BJ (cell line): ENCODE measurements at regions of chr11 and their contacts with region 1.

Region 1: GRCh38 chr11:76207642-76208401 is 1.5 kb upstream of the WNT11 start:
- DNase-seq: no peak
- H3K4me3 ChIP-seq: peak overlapping the region; percentile 39
- H3K27me3 ChIP-seq: peaks cover 58% of the 10 kb centered on the region
- CTCF ChIP-seq: peak; percentile 76

Region 2: DNA sequence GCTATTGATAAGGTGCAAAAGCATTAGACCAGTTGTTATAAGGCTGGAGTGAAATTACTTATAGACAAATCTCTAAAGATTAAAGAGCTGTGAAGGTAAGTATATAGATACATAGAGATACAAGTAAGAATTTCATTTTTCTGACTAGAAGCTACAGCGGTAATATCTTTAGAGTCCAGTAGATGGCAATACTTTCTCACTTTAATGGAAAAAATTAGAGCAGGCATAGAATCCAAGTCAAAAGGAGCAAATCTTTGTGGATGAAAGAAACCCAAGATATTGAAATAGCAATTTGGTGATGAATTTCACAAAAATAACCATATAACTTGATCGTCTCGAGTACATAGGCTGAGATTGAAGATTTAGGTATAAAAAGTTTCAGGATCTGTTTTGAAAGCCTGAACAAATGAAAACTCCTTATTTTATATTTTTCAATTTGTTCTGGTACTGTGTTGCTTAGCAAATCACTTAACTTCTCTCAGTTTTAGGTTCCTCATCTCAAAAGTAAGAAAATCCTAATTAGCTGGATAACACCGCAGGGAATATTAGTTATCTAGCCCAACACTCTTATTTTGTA is 310.9 kb before region 1 on chr11:
- CTCF ChIA-PET with region 1: interaction called, 45 read pairs
- POLR2A ChIA-PET with region 1: no interaction called
- DNase-seq: no peak
- H3K4me3 ChIP-seq: no peak overlapping the region
- H3K27me3 ChIP-seq: no peaks in the 10 kb centered on the region
- CTCF ChIP-seq: peak; percentile 53

Region 3: DNA sequence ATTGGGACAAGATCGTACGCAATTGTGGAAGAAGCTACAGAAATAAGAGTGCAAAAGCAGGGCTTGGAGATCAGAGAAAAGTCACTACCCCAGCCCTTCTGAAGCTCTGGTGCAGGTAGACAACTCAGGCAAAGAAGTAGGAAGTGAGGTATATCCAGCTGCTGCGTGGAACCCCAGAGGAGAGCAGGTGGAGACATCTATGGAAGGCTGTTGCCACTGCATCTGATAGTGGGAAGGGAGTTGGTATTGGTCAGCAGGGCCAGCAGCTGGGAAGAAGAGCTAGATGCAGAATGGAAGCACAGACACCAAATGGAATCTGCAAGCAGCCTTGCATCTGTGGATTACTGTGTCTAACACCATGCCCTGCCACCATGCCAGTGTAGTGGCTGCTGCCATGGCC is 166.6 kb before region 1 on chr11:
- CTCF ChIA-PET with region 1: no interaction called
- POLR2A ChIA-PET with region 1: no interaction called
- DNase-seq: no peak
- H3K4me3 ChIP-seq: no peak overlapping the region
- H3K27me3 ChIP-seq: no peaks in the 10 kb centered on the region
- CTCF ChIP-seq: no peak

Region 4: DNA sequence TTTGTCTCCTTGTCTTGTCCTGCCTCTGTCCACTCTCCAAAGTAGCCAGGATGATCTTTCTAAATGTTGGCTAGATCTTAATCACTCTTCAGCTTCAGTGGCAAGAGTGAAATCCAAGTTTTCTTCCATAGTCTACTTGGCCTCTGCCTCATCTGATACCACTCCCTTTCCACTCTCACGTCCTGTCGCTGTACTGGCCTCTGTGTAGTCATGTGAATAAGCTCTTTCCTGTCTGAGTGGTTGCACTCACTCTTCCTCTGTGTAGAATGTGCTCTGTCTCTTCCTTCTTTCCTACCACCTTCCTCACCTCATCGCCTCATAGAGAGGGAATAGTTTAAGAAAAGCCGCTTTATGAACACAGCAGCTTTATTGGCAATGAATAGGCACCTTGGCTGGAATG is 88.0 kb before region 1 on chr11:
- CTCF ChIA-PET with region 1: no interaction called
- POLR2A ChIA-PET with region 1: no interaction called
- DNase-seq: no peak
- H3K4me3 ChIP-seq: no peak overlapping the region
- H3K27me3 ChIP-seq: no peaks in the 10 kb centered on the region
- CTCF ChIP-seq: no peak

Region 5: GRCh38 chr11:76194872-76195668 is 12.8 kb before region 1 on chr11:
- CTCF ChIA-PET with region 1: interaction called, 27 read pairs
- POLR2A ChIA-PET with region 1: no interaction called
- DNase-seq: no peak
- H3K4me3 ChIP-seq: no peak overlapping the region
- H3K27me3 ChIP-seq: peaks cover 16% of the 10 kb centered on the region
- CTCF ChIP-seq: no peak

Region 6: DNA sequence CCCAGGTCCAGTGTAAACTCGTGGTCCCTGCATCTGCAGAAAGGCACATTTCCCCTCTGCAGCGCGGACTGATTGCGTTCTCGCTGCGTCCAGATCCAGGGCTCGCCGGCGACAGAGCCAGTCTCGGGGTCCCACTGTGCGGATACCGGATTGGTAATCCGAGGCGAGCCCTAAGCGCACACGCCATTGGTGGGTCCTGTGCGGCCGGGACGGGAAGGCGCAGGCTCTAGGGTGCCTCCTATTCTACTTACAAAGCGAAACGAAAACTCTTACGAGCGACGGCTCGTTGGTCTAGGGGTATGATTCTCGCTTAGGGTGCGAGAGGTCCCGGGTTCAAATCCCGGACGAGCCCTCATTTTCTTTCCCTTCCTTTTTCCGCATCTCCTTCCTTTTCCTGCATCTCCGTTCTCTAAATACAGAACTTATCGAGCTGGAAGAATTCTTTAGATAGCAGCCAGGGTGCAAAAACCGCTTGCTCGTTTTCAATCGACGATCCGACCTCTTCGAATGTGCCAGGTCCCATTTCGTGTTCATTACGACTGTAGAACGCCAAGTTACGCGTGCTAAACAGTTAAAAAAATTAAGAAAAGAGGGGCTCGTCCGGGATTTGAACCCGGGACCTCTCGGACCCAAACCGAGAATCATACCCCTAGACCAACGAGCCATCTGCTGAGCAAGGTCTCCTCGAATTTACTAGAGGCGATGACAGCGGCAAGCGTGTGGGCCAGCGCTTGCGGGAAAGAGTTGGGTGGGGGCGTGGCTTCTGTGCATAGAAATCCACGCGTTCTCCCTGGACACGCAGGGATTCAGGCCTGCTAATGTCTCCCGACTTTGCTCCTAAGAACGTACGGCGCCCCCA is 27.6 kb after region 1 on chr11:
- CTCF ChIA-PET with region 1: interaction called, 18 read pairs
- POLR2A ChIA-PET with region 1: no interaction called
- DNase-seq: peak; percentile 55
- H3K4me3 ChIP-seq: peak overlapping the region; percentile 78
- H3K27me3 ChIP-seq: peaks cover 6% of the 10 kb centered on the region
- CTCF ChIP-seq: no peak

Region 7: DNA sequence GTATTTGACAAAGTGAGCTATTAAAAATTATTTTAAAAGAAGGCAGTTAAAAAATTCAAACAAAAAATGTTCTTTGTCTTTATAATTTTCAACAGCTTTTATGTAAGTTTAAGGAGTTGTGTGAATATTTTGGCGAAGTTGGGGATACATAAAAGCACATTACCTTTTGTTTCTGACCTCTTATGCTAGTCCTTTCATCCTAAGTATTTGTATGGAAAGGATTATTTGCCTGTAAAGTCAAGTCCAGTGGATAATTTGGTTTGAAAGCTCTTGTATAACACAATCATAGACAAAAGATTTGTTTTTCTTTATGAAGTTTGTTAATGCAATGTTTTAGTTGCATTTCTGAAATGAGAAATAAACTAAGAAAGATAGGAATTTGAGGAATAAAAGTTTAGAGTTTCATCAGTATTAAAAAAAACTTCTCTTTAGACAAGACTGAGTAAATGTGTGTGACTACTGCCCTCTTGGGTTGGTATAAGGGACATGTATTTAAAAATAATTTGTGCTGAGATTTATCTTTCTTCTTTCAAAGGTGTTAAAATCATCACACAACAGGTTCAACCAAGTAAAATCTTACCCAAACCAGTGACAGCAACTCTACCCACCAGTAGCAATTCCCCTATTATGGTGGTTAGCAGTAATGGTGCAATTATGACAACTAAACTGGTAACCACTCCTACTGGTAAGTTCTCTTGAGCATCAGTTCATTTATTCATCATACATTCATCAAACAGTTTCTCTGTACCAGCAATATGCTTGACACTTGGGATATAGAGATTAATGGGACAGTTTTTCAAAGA is 305.2 kb after region 1 on chr11:
- CTCF ChIA-PET with region 1: interaction called, 11 read pairs
- POLR2A ChIA-PET with region 1: no interaction called
- DNase-seq: no peak
- H3K4me3 ChIP-seq: no peak overlapping the region
- H3K27me3 ChIP-seq: no peaks in the 10 kb centered on the region
- CTCF ChIP-seq: peak; percentile 43; the same call in 1 of the 2 replicates